ENCODE measurements at regions of chr1 and their contacts with region 1.

Region 1: DNA sequence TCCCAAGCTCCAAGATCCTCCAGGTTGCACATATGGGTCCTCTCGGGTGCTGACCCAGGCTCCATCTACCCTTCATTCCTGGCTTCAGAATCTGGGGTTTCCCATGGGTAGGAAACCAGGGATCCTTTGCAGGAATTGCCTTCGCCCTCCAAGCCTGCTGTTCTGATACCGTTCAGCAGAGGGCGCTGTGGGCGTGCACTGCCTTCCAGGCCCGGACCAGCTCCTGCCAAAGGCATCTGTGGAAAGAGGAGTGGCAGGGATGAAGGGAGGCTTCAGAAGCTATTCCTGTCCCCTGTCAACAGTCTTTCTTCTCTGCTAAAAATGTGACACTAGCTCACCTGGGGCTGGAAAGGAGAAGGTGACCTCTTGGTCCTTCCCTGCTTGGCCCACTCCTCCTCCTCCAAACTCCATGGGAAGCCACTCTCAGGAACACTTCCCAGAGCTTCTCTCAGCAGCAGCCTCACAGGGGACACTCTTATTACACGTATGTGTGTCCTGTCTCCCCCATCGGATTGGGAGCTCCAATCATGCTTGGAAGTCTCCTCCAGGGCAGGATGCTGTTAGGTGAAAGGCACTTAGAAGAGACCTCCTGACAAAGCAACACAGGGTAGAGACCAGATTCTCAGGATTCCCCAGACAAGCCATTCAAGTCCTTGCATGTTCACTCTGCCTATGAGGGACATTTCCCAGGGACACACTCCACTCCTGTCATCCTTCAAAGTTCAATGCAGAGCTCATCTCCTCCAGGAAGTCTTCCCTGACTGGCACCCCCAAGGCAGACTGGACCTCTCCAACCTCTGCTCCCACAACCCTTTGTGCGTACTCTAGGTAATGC is 71.3 kb downstream of the VWA5B1 start:
- DNase-seq: peak; percentile 64
- H3K27ac ChIP-seq: no peak overlapping the region
- CTCF ChIP-seq: peak; percentile 70

Region 2: DNA sequence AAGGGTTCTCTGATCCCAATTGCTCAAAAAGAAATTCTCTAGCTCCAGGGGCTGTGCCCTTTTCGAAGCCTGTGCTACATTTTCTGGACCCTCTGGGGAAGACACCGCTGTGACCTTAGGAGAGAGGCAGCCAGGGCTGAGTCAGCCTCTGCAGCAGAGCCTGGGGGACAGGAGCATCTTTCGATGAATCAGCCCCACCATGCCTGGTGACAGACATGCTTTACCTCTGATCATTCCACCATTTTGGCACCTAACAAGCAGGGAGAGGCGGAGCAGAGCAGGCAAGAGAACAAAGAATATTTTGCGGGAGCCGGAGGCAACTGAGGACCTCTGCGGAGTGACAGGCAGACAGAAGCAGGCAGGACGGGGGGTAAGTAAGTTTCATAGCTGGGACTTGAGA is 13.5 kb after region 1 on chr1:
- CTCF ChIA-PET with region 1: interaction called, 10 read pairs
- POLR2A ChIA-PET with region 1: no interaction called
- DNase-seq: no peak
- H3K27ac ChIP-seq: no peak overlapping the region
- CTCF ChIP-seq: no peak

Region 3: GRCh38 chr1:20493839-20494608 is 132.0 kb after region 1 on chr1:
- CTCF ChIA-PET with region 1: interaction called, 10 read pairs
- POLR2A ChIA-PET with region 1: no interaction called
- DNase-seq: peak; percentile 89
- H3K27ac ChIP-seq: peak overlapping the region; percentile 92
- CTCF ChIP-seq: peak; percentile 93

Measured in RWPE1 (cell line).